ENCODE measurements at regions of chr20 and their contacts with region 1.

Region 1: DNA sequence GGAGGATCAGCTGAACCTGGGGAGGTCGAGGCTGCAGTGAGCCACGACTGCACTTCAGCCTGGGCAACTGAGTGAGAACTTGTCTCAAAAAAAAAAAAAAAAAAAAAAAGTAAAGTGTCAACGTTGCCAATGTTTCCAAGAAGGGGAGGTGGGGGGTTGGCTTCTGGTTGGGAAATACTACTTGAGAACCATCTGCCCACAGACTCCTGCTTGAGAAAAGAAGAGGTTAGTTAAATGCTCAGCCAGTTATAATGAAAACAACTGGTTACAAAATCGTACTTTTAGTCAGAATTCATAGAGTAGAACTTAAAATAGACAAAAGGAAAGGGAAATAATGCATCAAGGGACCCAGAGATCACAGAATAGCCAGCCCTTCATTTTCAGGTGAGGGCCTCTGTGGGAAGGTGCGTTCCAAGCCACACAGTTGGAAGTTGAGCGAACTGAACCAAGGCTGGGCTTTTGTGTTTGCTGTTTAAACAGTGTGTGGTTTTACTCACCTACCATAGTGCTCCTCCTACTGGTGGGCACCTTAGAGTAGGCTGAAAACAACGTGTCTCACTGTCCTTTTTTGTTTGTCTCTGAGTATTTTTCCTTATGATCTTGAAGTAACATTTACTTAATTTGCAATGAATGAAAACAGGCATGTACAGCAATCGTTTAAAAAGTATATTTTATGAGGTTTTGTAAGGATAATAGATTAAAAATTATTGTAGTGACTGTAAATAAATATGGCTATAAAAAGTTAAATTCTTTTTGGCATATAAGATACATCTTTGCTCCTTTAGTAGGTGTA is 200.7 kb downstream of the BCAS1 start:
- DNase-seq: peak; percentile 66
- H3K4me3 Mint-ChIP-seq: peak overlapping the region; percentile 54
- H3K27ac Mint-ChIP-seq: peak overlapping the region; percentile 92
- H3K4me1 Mint-ChIP-seq: peaks cover 67% of the 10 kb centered on the region
- H3K27me3 Mint-ChIP-seq: no peaks in the 10 kb centered on the region

Region 2: GRCh38 chr20:53578492-53579222 is 291.0 kb before region 1 on chr20:
- intact Hi-C with region 1: loop called (anchors 1 kb)
- DNase-seq: peak; percentile 47
- H3K4me3 Mint-ChIP-seq: peak overlapping the region; percentile 75
- H3K27ac Mint-ChIP-seq: peak overlapping the region; percentile 86
- H3K4me1 Mint-ChIP-seq: peaks cover 78% of the 10 kb centered on the region
- H3K27me3 Mint-ChIP-seq: no peaks in the 10 kb centered on the region

Region 3: GRCh38 chr20:53643031-53643832 is 226.4 kb before region 1 on chr20:
- intact Hi-C with region 1: loop called (anchors 5 kb)
- DNase-seq: peak; percentile 67
- H3K4me3 Mint-ChIP-seq: peak overlapping the region; percentile 76
- H3K27ac Mint-ChIP-seq: peak overlapping the region; percentile 95
- H3K4me1 Mint-ChIP-seq: peaks cover 33% of the 10 kb centered on the region
- H3K27me3 Mint-ChIP-seq: no peaks in the 10 kb centered on the region

Region 4: DNA sequence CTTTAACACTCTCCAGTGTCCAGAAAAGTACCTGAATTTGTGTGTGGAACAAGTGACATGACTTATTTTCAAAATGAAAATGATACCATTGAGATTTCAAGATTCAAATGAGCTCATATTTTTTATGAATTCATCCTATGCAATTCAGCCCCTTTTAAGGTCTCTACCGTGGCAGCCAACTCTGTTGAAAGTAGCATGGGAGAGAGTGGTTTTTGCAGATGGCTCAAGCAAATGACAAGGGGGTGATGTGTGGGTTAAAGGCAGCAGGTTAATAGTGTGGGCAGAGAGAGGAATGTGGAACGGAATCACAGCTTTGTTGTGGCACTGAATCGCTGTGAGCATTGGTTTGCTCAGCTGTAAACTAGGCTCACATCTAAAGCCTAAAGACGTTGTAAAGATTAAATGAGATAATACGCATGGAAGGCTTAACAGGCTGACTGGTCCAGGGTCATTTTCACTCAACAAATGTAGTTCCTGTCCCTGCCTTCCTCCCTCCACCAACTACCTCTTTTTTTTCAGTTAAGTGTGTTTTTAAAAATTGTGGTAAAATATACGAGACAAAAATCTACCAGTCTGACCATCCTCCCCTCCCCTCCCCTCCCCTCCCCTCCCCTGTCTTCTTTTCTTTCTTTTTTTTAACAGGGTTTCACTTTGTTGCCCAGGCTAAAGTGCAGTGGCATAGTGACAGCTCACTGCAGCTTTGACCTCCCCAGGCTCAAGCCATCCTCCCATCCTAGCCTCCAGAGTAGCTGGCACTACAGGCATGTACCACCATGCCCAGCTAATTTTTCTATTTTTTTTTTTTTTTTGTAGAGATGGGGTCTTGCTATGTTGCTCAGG is 161.3 kb before region 1 on chr20:
- intact Hi-C with region 1: loop called (anchors 1 kb)
- DNase-seq: peak; percentile 42
- H3K4me3 Mint-ChIP-seq: peak overlapping the region; percentile 64
- H3K27ac Mint-ChIP-seq: peak overlapping the region; percentile 97
- H3K4me1 Mint-ChIP-seq: peaks cover 45% of the 10 kb centered on the region
- H3K27me3 Mint-ChIP-seq: no peaks in the 10 kb centered on the region

Region 5: DNA sequence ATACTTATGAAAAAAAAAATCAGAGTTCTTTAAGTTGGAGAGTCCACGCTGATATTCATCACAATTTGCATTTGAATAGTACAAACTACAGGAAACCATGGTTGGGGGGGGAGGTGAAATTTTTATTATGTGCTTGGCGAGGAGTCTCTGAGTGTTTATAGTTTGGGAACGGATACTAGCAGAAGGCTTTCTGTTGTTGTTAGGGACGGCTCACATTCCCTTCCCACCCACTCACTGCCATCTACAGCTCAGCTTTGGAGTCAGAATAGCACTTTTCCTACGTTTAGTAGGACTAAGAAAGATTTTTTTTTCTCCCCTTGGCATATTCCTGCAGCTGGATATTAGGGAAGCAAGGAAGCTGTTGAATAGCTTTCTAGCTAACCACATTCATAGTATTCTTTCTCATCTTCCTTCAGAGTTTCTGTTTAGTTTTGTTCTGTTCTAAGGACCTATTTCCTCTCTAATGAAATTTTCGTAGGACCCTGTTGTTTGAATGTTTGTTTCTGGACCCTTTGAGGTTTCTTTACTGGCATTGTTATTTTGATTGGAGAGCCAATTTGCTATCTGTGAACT is 40.9 kb before region 1 on chr20:
- intact Hi-C with region 1: loop called (anchors 5 kb)
- DNase-seq: no peak
- H3K4me3 Mint-ChIP-seq: peak overlapping the region; percentile 80
- H3K27ac Mint-ChIP-seq: peak overlapping the region; percentile 95
- H3K4me1 Mint-ChIP-seq: peaks cover 47% of the 10 kb centered on the region
- H3K27me3 Mint-ChIP-seq: no peaks in the 10 kb centered on the region

Region 6: GRCh38 chr20:53891306-53891944 is 21.8 kb after region 1 on chr20:
- intact Hi-C with region 1: loop called (anchors 1 kb)
- DNase-seq: no peak
- H3K4me3 Mint-ChIP-seq: no peak overlapping the region
- H3K27ac Mint-ChIP-seq: no peak overlapping the region
- H3K4me1 Mint-ChIP-seq: peaks cover 45% of the 10 kb centered on the region
- H3K27me3 Mint-ChIP-seq: no peaks in the 10 kb centered on the region

Region 7: DNA sequence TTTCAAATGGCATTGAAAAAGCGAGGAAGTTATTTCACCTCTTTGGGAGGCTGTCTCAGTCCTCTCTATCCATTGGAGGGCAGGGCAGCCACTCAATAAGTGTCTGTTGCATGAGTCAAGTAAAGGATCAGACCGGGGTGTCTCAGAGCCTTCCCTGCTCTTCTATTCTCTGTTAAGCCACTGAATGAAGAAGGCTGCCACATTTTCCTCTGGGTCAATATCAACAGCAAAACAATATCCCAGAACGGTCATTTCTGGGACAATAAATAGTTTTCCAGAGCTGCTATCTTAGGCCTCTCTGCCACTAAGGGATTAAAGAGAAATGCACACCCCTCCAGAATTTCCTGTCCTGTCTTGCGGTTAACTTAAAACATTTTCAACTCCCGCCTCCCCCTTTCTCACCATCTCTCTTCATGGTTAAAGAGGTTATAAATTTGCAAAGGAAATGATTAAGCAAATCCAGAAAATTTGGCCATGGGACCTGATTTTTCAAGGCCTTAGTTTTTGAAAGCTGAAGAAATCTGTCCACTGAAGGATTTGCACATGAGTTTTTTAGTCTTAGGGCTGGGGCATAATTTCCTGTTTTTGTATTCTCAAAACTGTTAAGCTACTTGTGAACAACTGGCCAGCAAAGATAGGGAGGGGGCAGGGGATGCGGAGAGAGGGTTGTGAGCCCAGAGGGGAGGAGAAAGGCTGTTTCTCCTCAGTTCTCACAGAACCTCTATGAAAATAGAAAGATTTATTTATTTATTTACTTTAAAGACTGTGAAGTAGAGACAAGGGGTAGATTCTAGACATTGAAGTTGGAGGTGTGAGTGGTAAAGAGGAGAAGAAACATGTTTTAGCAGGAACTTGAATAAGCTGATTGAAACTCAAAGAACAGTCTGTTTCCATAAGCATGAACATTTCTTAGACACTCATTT is 65.0 kb after region 1 on chr20:
- intact Hi-C with region 1: loop called (anchors 5 kb)
- DNase-seq: no peak
- H3K4me3 Mint-ChIP-seq: peak overlapping the region; percentile 24
- H3K27ac Mint-ChIP-seq: peak overlapping the region; percentile 83
- H3K4me1 Mint-ChIP-seq: peaks cover 51% of the 10 kb centered on the region
- H3K27me3 Mint-ChIP-seq: no peaks in the 10 kb centered on the region